ENCODE measurements at regions of chr1 and their contacts with region 1.

Region 1: GRCh38 chr1:243850452-243851256 is 611 bp upstream of the AKT3 start:
- DNase-seq: peak; percentile 63 to 84 (median 78)
- H3K4me3 ChIP-seq: peak overlapping the region; percentile 59 to 92 (median 81)
- H3K27ac ChIP-seq: peak overlapping the region; percentile 72 to 100 (median 97)
- H3K27me3 ChIP-seq: no peaks in the 10 kb centered on the region
- CTCF ChIP-seq: peak in 4 of 56 donors; percentile 3 to 20 (median 8)

Region 2: GRCh38 chr1:243343970-243344937 is 506.4 kb before region 1 on chr1:
- intact Hi-C with region 1: loop called in 1 of 2 experiments (anchors 10 kb)
- DNase-seq: peak in 1 of 10 donors; percentile 25
- H3K4me3 ChIP-seq: no peak overlapping the region
- H3K27ac ChIP-seq: peak overlapping the region in 3 of 59 donors; percentile 3 to 30 (median 13)
- H3K27me3 ChIP-seq: no peaks in the 10 kb centered on the region
- CTCF ChIP-seq: peak; percentile 59 to 95 (median 82)

Region 3: DNA sequence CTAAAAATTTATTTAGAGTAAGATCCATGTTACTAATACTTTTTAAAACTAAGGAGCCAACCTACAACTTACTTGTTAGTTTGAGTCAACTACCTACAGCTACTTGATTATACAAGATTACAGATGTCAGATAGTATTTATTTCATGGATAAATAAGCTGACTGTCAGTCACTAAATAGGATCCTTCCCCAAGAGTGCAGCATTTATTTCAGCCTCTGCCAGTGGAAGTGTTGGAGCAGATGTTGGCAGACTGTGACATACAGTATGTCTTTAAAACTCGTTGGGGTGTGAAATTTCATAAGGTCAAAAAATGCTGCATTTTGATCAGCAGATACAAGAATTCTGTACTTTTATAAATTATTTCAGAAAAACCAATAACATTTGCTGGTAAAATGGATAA is 156.9 kb before region 1 on chr1:
- intact Hi-C with region 1: loop called in 1 of 2 experiments (anchors 10 kb)
- DNase-seq: no peak
- H3K4me3 ChIP-seq: no peak overlapping the region
- H3K27ac ChIP-seq: no peak overlapping the region
- H3K27me3 ChIP-seq: no peaks in the 10 kb centered on the region
- CTCF ChIP-seq: no peak

Region 4: GRCh38 chr1:243903895-243904294 is 53.2 kb after region 1 on chr1:
- intact Hi-C with region 1: loop called (anchors 2 to 5 kb)
- DNase-seq: no peak
- H3K4me3 ChIP-seq: peak overlapping the region in 10 of 59 donors; percentile 0 to 37 (median 32)
- H3K27ac ChIP-seq: peak overlapping the region in 28 of 59 donors; percentile 8 to 82 (median 56)
- H3K27me3 ChIP-seq: no peaks in the 10 kb centered on the region
- CTCF ChIP-seq: no peak

Region 5: DNA sequence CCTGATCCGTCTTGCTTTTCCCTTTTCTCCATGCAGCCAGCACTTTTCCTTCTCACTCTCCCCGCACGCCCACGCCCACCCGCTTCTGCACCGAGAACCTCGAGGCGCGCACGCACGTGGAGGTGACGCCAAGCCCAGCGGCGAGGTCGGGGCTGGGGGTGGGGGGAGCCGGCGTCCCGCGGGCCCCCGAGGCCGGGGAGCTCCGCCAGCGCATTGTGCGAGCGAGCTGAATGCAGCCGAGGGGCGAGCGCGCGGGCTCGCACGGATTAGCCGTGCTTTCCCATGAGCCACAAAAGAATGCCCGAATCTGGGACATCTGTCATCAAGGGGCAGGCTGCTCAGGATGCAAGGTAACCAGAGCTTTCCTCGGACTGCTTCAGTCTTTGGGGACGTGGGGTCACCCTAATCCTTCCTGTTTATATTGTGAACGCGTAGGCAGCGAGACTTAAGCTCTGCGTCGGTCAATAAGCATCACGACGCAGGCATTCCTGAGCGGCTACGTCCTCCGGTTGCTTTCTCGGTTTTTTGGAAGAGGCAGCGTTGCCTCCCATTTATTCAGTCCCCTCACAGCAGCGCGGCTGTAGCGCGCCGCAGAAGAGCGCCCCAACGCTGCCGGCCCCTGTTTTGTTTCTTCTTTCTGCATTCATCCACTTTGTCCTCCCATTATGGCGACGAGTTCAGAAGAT is 66.7 kb after region 1 on chr1:
- intact Hi-C with region 1: loop called (anchors 2 to 5 kb)
- DNase-seq: peak; percentile 28 to 75 (median 54)
- H3K4me3 ChIP-seq: peak overlapping the region; percentile 39 to 87 (median 69)
- H3K27ac ChIP-seq: peak overlapping the region in 56 of 59 donors; percentile 9 to 92 (median 78)
- H3K27me3 ChIP-seq: no peaks in the 10 kb centered on the region
- CTCF ChIP-seq: peak in 46 of 56 donors; percentile 7 to 65 (median 39)